PC-9 (cell line): ENCODE measurements at regions of chr2 and their contacts with region 1.

Region 1: DNA sequence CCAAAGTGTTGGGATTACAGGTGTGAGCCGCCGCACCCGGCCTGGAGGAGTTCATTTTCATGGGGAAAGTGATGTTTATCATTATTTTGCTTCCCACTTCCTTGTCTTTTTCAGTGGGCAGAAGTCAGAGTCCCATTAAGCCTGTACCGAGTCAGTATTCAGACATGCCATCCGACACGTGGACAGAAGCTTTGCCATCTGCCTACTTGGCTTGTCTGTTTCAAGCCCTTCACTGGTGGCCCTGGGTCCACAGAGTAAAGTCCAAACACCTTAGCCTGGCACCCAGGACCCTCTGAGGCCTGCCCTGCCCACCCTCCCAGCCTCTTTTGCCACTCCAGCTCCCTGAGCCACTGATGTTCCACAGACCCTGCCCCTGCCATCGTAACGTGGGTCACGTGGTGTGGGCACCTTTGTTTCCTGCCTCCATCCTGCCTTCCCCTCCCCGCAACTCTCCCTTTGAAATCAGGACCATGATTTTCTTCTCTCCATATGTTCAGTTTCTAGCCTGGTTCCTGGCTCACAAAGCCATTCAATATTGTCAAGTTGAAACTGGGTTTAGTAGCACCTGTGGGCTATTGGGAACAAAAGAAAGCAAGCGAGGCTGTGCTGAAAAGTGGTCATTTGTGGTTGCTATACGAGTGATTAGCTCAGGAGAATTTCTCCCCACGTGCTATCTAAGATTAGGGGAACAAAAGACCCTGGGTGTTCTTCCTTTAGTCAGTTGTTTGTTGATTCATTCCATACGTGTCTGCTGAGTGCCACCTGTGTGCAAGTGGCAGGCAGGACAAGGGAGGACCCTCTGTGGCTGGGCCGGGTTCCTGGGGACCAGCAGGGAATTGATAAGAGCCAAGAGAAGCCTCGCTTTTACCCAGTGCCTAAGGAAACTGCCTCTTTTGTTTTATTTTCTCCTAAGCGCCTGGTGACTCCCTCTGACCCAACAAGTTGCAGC is 5.1 kb upstream of the ODC1 start:
- DNase-seq: no peak
- H3K4me3 ChIP-seq: no peak overlapping the region
- H3K27ac ChIP-seq: no peak overlapping the region
- H3K4me1 ChIP-seq: peaks cover 37% of the 10 kb centered on the region
- H3K27me3 ChIP-seq: no peaks in the 10 kb centered on the region
- CTCF ChIP-seq: no peak

Region 2: GRCh38 chr2:10493636-10494281 is 40.5 kb after region 1 on chr2:
- CTCF ChIA-PET with region 1: no interaction called
- POLR2A ChIA-PET with region 1: interaction called, 3 read pairs
- intact Hi-C with region 1: loop called (anchors 2 kb)
- DNase-seq: peak; percentile 91 to 97
- H3K4me3 ChIP-seq: no peak overlapping the region
- H3K27ac ChIP-seq: peak overlapping the region; percentile 61
- H3K4me1 ChIP-seq: peaks cover 41% of the 10 kb centered on the region
- H3K27me3 ChIP-seq: no peaks in the 10 kb centered on the region
- CTCF ChIP-seq: no peak